Caco-2 (cell line): ENCODE measurements at regions of chr17 and their contacts with region 1.

Region 1: GRCh38 chr17:63425482-63425881 is 20.6 kb downstream of the CYB561 start:
- DNase-seq: peak; percentile 76 to 83
- H3K4me3 ChIP-seq: no peak overlapping the region
- H3K4me3 Mint-ChIP-seq: no peak overlapping the region
- H3K27ac Mint-ChIP-seq: no peak overlapping the region
- H3K4me1 ChIP-seq: no peaks in the 10 kb centered on the region
- H3K4me1 Mint-ChIP-seq: no peaks in the 10 kb centered on the region
- H3K27me3 ChIP-seq: no peaks in the 10 kb centered on the region
- H3K27me3 Mint-ChIP-seq: peaks cover 8% of the 10 kb centered on the region
- CTCF ChIP-seq: peak; percentile 89 to 96

Region 2: DNA sequence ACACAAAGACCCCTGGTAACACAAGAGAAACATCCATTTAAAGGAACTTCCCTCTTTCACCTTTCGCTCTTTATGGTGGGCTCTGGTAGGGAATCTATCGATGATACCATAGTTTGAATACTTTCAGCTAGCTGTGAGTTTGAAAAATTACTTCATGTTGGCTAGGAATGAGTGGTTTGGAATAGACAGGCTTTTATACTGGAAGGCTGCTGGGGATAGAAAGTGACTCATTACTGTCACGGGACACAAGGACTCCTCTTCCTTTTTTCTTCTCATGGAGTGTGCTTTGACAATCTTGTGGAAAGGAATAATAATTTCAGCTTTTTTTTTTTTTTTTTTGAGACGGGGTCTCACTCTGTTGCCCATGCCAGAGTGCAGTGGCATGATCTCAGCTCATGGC is 56.2 kb before region 1 on chr17:
- CTCF ChIA-PET with region 1: no interaction called
- POLR2A ChIA-PET with region 1: no interaction called
- intact Hi-C with region 1: no loop called
- DNase-seq: no peak
- H3K4me3 ChIP-seq: no peak overlapping the region
- H3K4me3 Mint-ChIP-seq: no peak overlapping the region
- H3K27ac Mint-ChIP-seq: no peak overlapping the region
- H3K4me1 ChIP-seq: no peaks in the 10 kb centered on the region
- H3K4me1 Mint-ChIP-seq: no peaks in the 10 kb centered on the region
- H3K27me3 ChIP-seq: no peaks in the 10 kb centered on the region; the same call in 1 of the 2 replicates
- H3K27me3 Mint-ChIP-seq: peaks cover 7% of the 10 kb centered on the region
- CTCF ChIP-seq: no peak

Region 3: GRCh38 chr17:63381101-63381729 is 44.3 kb before region 1 on chr17:
- CTCF ChIA-PET with region 1: no interaction called
- POLR2A ChIA-PET with region 1: no interaction called
- intact Hi-C with region 1: no loop called
- DNase-seq: no peak
- H3K4me3 ChIP-seq: no peak overlapping the region
- H3K4me3 Mint-ChIP-seq: no peak overlapping the region
- H3K27ac Mint-ChIP-seq: no peak overlapping the region
- H3K4me1 ChIP-seq: no peaks in the 10 kb centered on the region
- H3K4me1 Mint-ChIP-seq: no peaks in the 10 kb centered on the region
- H3K27me3 ChIP-seq: no peaks in the 10 kb centered on the region
- H3K27me3 Mint-ChIP-seq: peaks cover 14% of the 10 kb centered on the region
- CTCF ChIP-seq: no peak

Region 4: DNA sequence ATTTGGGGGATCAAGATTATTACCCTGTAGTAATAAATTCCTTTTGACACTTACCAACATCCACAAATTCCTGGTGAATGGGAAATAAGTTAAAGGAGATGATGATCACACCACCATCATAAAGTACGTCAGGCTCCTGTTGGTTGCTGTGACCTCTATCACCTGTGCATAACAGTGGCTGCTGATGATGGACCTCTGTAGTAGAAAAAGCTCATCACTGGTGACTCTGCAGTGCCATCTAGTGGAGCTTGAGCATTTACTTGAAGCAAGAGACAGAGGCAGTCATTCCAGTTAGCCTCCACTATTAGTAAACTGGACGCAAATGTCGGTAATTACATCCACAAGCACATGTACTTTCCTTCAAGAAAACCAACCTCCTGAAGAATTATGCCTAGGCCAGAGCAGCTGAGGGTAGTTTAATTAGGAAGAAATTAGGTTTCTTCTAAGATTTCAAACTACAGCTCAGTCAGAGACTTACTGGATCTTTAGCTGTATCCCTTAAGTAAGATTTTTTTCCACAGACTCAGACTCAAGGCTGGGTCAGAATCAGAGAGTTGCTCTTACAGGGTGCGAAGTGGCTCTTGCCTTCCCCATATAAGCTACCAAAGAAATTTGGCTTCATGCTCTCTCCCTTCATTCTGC is 18.7 kb before region 1 on chr17:
- CTCF ChIA-PET with region 1: interaction called, 21 read pairs
- POLR2A ChIA-PET with region 1: no interaction called
- intact Hi-C with region 1: no loop called
- DNase-seq: peak; percentile 82
- H3K4me3 ChIP-seq: no peak overlapping the region
- H3K4me3 Mint-ChIP-seq: no peak overlapping the region
- H3K27ac Mint-ChIP-seq: no peak overlapping the region
- H3K4me1 ChIP-seq: no peaks in the 10 kb centered on the region
- H3K4me1 Mint-ChIP-seq: no peaks in the 10 kb centered on the region
- H3K27me3 ChIP-seq: no peaks in the 10 kb centered on the region
- H3K27me3 Mint-ChIP-seq: peaks cover 15% of the 10 kb centered on the region
- CTCF ChIP-seq: peak; percentile 80 to 83

Region 5: GRCh38 chr17:63478791-63479494 is 53.5 kb after region 1 on chr17:
- CTCF ChIA-PET with region 1: interaction called, 107 read pairs
- POLR2A ChIA-PET with region 1: no interaction called
- intact Hi-C with region 1: loop called (anchors 1 kb)
- DNase-seq: peak; percentile 89 to 91
- H3K4me3 ChIP-seq: no peak overlapping the region
- H3K4me3 Mint-ChIP-seq: peak overlapping the region; percentile 50
- H3K27ac Mint-ChIP-seq: no peak overlapping the region
- H3K4me1 ChIP-seq: peaks cover 13% of the 10 kb centered on the region
- H3K4me1 Mint-ChIP-seq: peaks cover 10% of the 10 kb centered on the region
- H3K27me3 ChIP-seq: no peaks in the 10 kb centered on the region
- H3K27me3 Mint-ChIP-seq: peaks cover 12% of the 10 kb centered on the region
- CTCF ChIP-seq: peak; percentile 67 to 97

Region 6: DNA sequence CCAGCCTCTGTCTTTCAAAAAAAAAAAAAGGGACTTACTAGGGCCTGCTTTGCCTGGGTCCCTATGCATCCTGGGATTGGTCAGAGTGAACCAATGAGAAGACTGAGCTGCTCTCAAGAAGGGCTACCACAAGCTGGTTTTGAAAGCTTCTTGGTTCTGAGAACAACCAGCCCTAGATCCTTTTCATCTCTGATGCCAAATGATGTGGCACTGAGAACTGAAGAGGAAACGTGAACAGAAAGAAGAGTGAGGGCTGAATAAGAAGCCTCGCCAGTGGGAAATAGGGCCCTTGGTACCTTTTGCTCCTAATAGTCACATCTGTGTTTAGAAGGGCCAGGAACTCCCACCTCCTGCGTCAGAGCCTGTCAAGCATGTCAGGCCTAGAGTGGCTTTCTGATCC is 185.9 kb after region 1 on chr17:
- CTCF ChIA-PET with region 1: interaction called, 61 read pairs
- POLR2A ChIA-PET with region 1: no interaction called
- intact Hi-C with region 1: loop called (anchors 1 kb)
- DNase-seq: no peak
- H3K4me3 ChIP-seq: no peak overlapping the region
- H3K4me3 Mint-ChIP-seq: no peak overlapping the region
- H3K27ac Mint-ChIP-seq: no peak overlapping the region
- H3K4me1 ChIP-seq: no peaks in the 10 kb centered on the region
- H3K4me1 Mint-ChIP-seq: no peaks in the 10 kb centered on the region
- H3K27me3 ChIP-seq: no peaks in the 10 kb centered on the region
- H3K27me3 Mint-ChIP-seq: peaks cover 3% of the 10 kb centered on the region
- CTCF ChIP-seq: no peak

Region 7: GRCh38 chr17:63665527-63666214 is 240.2 kb after region 1 on chr17:
- CTCF ChIA-PET with region 1: no interaction called
- POLR2A ChIA-PET with region 1: no interaction called
- intact Hi-C with region 1: no loop called
- DNase-seq: no peak
- H3K4me3 ChIP-seq: no peak overlapping the region
- H3K4me3 Mint-ChIP-seq: no peak overlapping the region
- H3K27ac Mint-ChIP-seq: no peak overlapping the region
- H3K4me1 ChIP-seq: no peaks in the 10 kb centered on the region
- H3K4me1 Mint-ChIP-seq: no peaks in the 10 kb centered on the region
- H3K27me3 ChIP-seq: no peaks in the 10 kb centered on the region
- H3K27me3 Mint-ChIP-seq: no peaks in the 10 kb centered on the region
- CTCF ChIP-seq: no peak

Region 8: GRCh38 chr17:63697341-63698286 is 272.1 kb after region 1 on chr17:
- CTCF ChIA-PET with region 1: no interaction called
- POLR2A ChIA-PET with region 1: no interaction called
- intact Hi-C with region 1: loop called (anchors 10 kb)
- DNase-seq: peak in 1 of 2 experiments; percentile 69
- H3K4me3 ChIP-seq: no peak overlapping the region
- H3K4me3 Mint-ChIP-seq: peak overlapping the region; percentile 65
- H3K27ac Mint-ChIP-seq: no peak overlapping the region
- H3K4me1 ChIP-seq: no peaks in the 10 kb centered on the region
- H3K4me1 Mint-ChIP-seq: no peaks in the 10 kb centered on the region
- H3K27me3 ChIP-seq: no peaks in the 10 kb centered on the region
- H3K27me3 Mint-ChIP-seq: no peaks in the 10 kb centered on the region
- CTCF ChIP-seq: peak; percentile 29 to 56